H1 (cell line): ENCODE measurements at regions of chr5 and their contacts with region 1.

Region 1: DNA sequence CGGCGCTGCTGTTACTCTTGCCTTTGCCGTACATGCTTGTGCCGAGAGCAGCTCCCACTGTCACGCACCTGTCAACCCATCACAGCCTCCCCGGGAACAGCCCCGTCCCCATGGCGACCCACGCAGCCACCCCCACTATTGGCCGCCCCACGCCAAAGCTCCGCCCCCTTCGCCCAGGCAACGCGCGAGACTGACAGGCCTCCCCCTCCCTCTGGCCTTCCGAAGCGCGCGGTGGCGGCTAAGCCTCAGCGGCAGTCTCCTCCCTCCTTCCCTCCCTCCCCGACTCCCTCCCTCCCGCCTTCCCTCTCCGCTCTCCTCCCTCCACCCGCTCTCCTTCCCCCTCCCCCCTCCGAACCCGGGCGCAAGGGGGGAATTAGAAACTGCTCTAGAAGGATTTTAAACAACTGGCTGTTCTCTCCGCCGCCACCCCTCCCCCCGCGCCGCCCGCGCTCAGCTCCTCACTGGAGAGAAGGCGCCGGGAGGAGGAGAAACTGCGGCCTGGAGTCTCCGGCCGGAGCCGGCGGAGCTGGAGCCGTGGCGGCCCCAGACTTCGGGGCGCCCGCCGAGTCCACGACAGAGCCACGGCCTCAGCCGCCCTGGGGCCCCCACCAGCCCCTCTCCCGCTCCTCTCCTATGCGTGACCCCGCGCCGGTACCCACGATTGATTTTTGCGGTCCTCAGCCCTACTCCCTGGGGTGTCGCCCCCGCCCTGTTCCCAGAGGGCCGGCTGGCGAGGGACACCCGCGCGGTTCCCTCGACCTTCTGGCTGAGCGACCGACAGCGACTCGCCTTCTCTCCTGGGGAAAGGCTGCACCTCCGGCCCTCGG is at the start of gene SSBP2:
- DNase-seq: peak; percentile 95 to 100
- H3K4me3 ChIP-seq: peak within 1 kb of the TSS; percentile 49 to 84 (median 68)
- H3K27ac ChIP-seq: no peak within 1 kb of the TSS
- H3K4me1 ChIP-seq: peaks cover 4 to 25% (median 13%) of the 10 kb centered on the region in 4 experiments; a peak in 6 of 7 replicates
- H3K27me3 ChIP-seq: no peaks in the 10 kb centered on the region; a peak in 1 of 7 replicates
- CTCF ChIP-seq: peak in 1 of 3 experiments; percentile 9; a peak in 1 of 4 replicates
- EP300 ChIP-seq: peak; percentile 96 to 99
- POLR2A ChIP-seq: peak in 1 of 2 experiments; percentile 30; a peak in 1 of 3 replicates
- RAD21 ChIP-seq: peak; percentile 59 to 67
- total RNA-seq, gene SSBP2: 21.5 and 27.6 TPM in 2 replicates

Region 2: DNA sequence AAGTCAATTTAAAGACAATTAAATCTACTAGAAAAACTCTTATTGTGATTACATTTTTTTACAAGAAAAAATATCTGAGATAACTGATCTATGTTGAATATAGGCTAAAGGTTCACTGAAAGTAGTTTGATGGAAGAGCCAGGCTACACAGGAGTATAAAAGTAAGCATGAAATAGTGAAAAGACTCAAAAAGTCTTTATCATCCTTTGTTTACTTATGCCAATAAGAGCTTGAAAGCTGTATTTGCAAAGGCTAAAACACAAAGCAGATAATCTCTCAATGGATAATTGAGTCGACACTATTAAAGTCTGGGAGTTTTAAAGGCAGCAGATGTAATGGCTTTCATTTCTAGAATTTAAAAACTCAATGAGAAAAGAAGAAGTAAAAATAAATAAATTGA is 42.3 kb before region 1 on chr5:
- CTCF ChIA-PET with region 1: no interaction called
- POLR2A ChIA-PET with region 1: no interaction called
- DNase-seq: no peak
- H3K4me3 ChIP-seq: no peak overlapping the region
- H3K27ac ChIP-seq: no peak overlapping the region
- H3K4me1 ChIP-seq: no peaks in the 10 kb centered on the region
- H3K27me3 ChIP-seq: no peaks in the 10 kb centered on the region
- CTCF ChIP-seq: no peak
- EP300 ChIP-seq: no peak
- POLR2A ChIP-seq: no peak
- RAD21 ChIP-seq: no peak

Region 3: DNA sequence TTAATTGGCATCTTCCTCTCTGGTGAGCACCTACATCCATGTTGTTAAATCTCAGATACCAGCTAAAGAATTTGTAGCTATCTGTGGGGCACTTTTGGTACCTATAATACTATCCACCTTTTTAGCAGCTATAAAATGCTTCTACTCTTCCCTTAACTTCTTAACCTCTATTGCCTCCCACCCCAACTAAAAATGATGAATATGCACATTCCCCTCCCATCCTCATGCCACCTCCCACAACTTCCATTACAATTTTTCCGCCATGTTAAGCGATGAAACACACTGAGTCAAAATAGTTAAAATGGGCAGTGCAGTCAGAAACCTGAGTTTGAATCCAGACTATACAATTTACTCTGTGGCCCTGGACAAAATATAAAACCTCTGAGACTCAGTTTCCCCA is 10.5 kb before region 1 on chr5:
- CTCF ChIA-PET with region 1: no interaction called
- POLR2A ChIA-PET with region 1: interaction called, 12 read pairs
- DNase-seq: no peak
- H3K4me3 ChIP-seq: no peak overlapping the region
- H3K27ac ChIP-seq: no peak overlapping the region
- H3K4me1 ChIP-seq: no peaks in the 10 kb centered on the region
- H3K27me3 ChIP-seq: no peaks in the 10 kb centered on the region
- CTCF ChIP-seq: no peak
- EP300 ChIP-seq: no peak
- POLR2A ChIP-seq: no peak
- RAD21 ChIP-seq: no peak

Region 4: DNA sequence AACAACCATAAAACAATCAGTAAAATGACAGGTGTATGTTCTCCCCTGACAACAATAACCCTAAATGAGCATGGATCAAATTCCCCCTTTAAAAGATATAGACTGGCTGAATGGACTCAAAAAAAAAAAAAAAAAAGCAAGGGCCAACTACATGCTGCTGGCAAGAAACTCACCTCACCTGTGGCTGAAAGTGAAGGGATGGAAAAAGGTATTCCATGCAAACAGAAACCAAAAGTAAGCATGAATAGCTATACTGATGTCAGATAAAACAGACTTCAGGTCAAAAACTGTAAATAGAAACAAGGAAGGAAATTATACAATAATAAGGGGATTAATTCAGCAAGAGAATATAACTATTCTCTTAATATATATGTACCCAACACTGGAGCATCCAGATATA is 53.9 kb after region 1 on chr5:
- CTCF ChIA-PET with region 1: no interaction called
- POLR2A ChIA-PET with region 1: no interaction called
- DNase-seq: no peak
- H3K4me3 ChIP-seq: no peak overlapping the region
- H3K27ac ChIP-seq: no peak overlapping the region
- H3K4me1 ChIP-seq: no peaks in the 10 kb centered on the region
- H3K27me3 ChIP-seq: no peaks in the 10 kb centered on the region
- CTCF ChIP-seq: no peak
- EP300 ChIP-seq: no peak
- POLR2A ChIP-seq: no peak
- RAD21 ChIP-seq: no peak

Region 5: GRCh38 chr5:81994679-81995078 is 243.5 kb after region 1 on chr5:
- CTCF ChIA-PET with region 1: no interaction called
- POLR2A ChIA-PET with region 1: no interaction called
- DNase-seq: no peak
- H3K4me3 ChIP-seq: no peak overlapping the region
- H3K27ac ChIP-seq: no peak overlapping the region
- H3K4me1 ChIP-seq: no peaks in the 10 kb centered on the region
- H3K27me3 ChIP-seq: no peaks in the 10 kb centered on the region
- CTCF ChIP-seq: no peak
- EP300 ChIP-seq: no peak
- POLR2A ChIP-seq: no peak
- RAD21 ChIP-seq: no peak